ENCODE measurements at regions of chr12 and their contacts with region 1.

Region 1: GRCh38 chr12:26274441-26275312 is 79.3 kb downstream of the SSPN start:
- DNase-seq: peak; percentile 20
- H3K4me3 Mint-ChIP-seq: no peak overlapping the region
- H3K27ac Mint-ChIP-seq: peak overlapping the region; percentile 60
- H3K4me1 Mint-ChIP-seq: peaks cover 26% of the 10 kb centered on the region
- H3K27me3 Mint-ChIP-seq: peaks cover 23% of the 10 kb centered on the region

Region 2: DNA sequence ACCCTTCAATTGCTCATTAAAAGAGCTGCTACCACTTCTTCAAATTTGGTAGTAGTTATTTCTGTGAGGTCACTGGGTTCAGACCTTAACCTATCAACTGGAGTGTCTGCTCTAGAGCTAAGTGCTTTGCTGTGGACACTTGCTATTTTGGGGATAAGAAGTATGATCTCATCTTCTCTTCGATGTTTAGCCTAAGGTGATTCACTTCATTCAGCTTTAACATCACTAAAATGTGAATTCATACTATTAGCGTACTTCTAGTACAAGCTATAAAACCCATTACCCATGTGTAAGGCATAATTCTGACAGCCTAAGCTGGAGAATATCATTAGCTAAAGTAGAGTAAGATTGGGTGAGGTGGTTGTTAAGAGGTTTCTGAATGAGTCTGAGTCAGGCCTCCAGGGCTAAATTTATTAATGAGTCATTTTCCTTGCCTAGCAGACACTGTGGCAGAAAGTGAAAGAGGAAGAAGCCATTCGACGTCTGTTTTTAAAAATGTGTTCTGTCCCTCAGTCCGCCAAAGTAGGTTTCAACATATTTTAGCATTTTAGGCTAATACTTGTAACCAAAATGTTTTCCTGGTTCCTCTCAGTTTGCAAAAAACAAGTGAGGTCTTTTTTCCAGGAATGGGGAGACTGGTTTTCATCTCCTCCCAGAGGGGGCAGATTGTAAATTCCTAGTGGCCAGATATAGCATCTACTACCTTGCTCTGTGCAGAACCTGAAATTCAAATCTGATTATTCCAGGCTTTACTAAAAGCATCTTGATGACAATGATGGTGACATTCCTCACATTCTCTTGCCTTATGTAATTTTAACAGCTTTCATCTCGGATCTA is 24.3 kb after region 1 on chr12:
- intact Hi-C with region 1: loop called (anchors 1 kb)
- DNase-seq: no peak
- H3K4me3 Mint-ChIP-seq: peak overlapping the region; percentile 28
- H3K27ac Mint-ChIP-seq: no peak overlapping the region
- H3K4me1 Mint-ChIP-seq: peaks cover 23% of the 10 kb centered on the region
- H3K27me3 Mint-ChIP-seq: peaks cover 23% of the 10 kb centered on the region

Region 3: GRCh38 chr12:26318661-26319068 is 44.0 kb after region 1 on chr12:
- intact Hi-C with region 1: loop called (anchors 1 kb)
- DNase-seq: no peak
- H3K4me3 Mint-ChIP-seq: no peak overlapping the region
- H3K27ac Mint-ChIP-seq: no peak overlapping the region
- H3K4me1 Mint-ChIP-seq: peaks cover 8% of the 10 kb centered on the region
- H3K27me3 Mint-ChIP-seq: peaks cover 21% of the 10 kb centered on the region